AG04450 (cell line): ENCODE measurements at regions of chr5 and their contacts with region 1.

Region 1: DNA sequence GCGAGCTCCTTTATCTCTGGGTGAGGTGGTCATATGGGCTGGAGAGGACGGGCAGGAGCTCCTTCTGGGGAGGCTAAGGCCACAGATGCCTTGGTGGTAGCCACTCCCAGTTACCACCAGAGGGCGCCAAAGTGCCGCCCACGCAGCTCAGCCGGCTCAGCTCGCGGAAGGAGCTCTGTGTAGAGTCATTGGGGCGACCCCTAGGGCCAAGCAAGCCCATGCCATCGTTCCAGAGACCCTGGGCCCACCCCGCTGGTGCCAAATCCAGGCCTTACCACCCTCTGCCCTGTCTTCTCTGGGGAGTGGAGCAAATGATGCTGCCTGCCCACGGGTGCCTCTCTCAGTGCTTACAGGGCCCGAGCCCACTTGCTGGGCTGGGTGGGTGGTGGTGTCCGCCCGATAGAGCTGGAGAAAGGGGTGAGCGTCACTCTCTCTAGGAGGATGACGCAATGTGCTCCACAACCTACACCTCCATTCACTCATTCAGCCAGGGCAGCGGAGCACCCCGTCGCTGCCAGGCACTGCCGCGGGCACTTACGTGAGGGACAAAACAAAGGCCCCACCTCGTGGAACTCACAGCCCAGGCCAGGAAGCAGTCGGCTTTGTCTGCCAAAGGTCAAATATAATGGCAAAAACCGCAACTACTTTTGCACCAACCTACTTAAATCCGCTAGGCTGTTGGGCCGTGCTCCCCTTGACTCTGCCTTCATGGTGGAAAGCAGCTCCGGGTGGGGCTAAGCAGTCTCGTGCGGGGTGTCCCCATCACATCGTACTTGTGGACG is 13.8 kb downstream of the TSPAN17 start:
- DNase-seq: peak; percentile 26
- H3K4me3 ChIP-seq: no peak overlapping the region
- H3K27ac ChIP-seq: no peak overlapping the region
- H3K27me3 ChIP-seq: peaks cover 21% of the 10 kb centered on the region
- CTCF ChIP-seq: peak; percentile 95

Region 2: GRCh38 chr5:176647030-176647866 is 13.8 kb before region 1 on chr5 and contains the start of gene TSPAN17:
- CTCF ChIA-PET with region 1: interaction called, 112 read pairs
- POLR2A ChIA-PET with region 1: interaction called, 7 read pairs
- DNase-seq: peak; percentile 96
- H3K4me3 ChIP-seq: peak within 1 kb of the TSS; percentile 86
- H3K27ac ChIP-seq: peak within 1 kb of the TSS; percentile 31
- H3K27me3 ChIP-seq: no peaks in the 10 kb centered on the region
- CTCF ChIP-seq: peak; percentile 38
- polyA plus RNA-seq, gene TSPAN17: 40.9 and 44.3 TPM in 2 replicates

Region 3: DNA sequence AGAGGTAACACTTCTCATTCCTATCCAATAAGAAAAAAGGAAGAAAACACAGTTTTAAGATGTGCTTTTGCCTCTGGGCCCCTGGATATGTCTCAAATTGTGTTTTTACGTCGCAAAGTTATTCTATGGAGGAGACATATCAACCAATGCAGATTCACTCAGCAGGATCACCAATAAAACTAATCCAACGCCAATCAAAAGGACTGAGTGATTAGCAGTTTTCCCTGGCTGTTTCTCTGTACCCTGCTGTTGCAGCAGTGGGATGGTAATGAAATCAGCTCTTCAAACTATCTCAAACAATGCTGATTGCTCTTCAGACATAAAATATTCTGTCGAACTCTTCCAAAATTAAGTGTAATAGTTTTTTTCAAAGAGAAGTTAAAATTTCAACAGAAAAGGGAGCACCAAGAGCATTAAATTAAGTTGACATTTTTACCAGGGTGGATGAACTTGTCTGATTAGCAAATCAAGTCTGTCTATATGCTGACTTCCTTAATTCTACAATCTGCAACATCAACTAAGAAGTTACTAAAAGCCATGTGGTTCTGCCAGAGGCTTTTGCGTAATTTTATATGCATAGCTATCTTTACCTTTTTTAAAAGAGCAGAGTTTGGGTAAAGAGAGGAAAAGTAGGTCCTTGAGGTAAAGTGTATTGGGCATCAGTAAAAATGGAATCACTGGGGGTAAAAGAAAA is 247.8 kb after region 1 on chr5:
- CTCF ChIA-PET with region 1: interaction called, 16 read pairs
- POLR2A ChIA-PET with region 1: no interaction called
- DNase-seq: no peak
- H3K4me3 ChIP-seq: no peak overlapping the region
- H3K27ac ChIP-seq: no peak overlapping the region
- H3K27me3 ChIP-seq: no peaks in the 10 kb centered on the region
- CTCF ChIP-seq: no peak

Region 4: GRCh38 chr5:176941951-176942350 is 280.9 kb after region 1 on chr5:
- CTCF ChIA-PET with region 1: interaction called, 24 read pairs
- POLR2A ChIA-PET with region 1: interaction called, 4 read pairs
- DNase-seq: no peak
- H3K4me3 ChIP-seq: no peak overlapping the region
- H3K27ac ChIP-seq: no peak overlapping the region
- H3K27me3 ChIP-seq: no peaks in the 10 kb centered on the region
- CTCF ChIP-seq: no peak

Region 5: GRCh38 chr5:176965633-176966032 is 304.6 kb after region 1 on chr5:
- CTCF ChIA-PET with region 1: interaction called, 41 read pairs
- POLR2A ChIA-PET with region 1: no interaction called
- DNase-seq: no peak
- H3K4me3 ChIP-seq: no peak overlapping the region
- H3K27ac ChIP-seq: no peak overlapping the region
- H3K27me3 ChIP-seq: no peaks in the 10 kb centered on the region
- CTCF ChIP-seq: no peak

Region 6: DNA sequence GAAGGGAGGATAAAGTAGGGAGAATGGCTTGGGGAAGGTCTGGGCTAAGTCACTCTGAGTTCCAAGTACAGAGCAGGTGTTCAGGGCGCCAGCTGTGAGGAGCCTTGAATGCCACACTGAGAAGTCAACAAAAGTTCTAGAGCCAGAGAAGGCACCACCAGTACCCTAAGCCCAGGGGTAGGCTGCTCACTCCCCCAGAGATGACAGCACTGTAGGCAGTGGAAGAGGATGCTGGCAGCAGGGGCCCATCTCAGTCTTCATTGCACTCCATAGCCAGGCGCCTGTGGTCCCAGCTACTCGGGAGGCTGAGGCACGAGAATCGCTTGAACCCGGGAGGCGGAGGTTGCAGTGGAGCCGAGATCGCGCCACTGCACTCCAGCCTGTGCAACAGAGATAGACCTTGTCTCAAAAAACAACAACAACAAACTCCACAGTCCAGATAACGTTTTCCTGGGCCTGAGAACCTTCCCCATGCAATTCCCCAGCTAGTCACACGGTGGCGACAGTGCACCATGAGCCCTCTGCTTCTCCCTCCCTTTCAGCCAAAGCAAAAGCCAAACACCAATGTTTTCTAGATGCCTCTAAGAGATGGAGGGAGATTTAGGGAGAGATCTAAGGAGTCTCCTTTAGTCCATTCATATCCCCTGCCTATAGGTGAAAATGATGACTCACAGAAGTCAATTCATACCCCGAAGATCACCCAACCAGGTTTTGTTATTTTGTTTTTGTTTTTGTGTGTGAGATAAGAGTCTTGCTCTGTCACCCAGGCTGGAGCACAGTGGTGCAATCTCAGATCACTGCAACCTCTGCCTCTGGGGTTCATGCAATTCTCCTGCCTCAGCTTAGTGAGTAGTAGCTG is 452.7 kb after region 1 on chr5:
- CTCF ChIA-PET with region 1: interaction called, 66 read pairs
- POLR2A ChIA-PET with region 1: no interaction called
- DNase-seq: no peak
- H3K4me3 ChIP-seq: no peak overlapping the region
- H3K27ac ChIP-seq: no peak overlapping the region
- H3K27me3 ChIP-seq: no peaks in the 10 kb centered on the region
- CTCF ChIP-seq: peak; percentile 100